ENCODE measurements at regions of chr11 and their contacts with region 1.

Region 1: DNA sequence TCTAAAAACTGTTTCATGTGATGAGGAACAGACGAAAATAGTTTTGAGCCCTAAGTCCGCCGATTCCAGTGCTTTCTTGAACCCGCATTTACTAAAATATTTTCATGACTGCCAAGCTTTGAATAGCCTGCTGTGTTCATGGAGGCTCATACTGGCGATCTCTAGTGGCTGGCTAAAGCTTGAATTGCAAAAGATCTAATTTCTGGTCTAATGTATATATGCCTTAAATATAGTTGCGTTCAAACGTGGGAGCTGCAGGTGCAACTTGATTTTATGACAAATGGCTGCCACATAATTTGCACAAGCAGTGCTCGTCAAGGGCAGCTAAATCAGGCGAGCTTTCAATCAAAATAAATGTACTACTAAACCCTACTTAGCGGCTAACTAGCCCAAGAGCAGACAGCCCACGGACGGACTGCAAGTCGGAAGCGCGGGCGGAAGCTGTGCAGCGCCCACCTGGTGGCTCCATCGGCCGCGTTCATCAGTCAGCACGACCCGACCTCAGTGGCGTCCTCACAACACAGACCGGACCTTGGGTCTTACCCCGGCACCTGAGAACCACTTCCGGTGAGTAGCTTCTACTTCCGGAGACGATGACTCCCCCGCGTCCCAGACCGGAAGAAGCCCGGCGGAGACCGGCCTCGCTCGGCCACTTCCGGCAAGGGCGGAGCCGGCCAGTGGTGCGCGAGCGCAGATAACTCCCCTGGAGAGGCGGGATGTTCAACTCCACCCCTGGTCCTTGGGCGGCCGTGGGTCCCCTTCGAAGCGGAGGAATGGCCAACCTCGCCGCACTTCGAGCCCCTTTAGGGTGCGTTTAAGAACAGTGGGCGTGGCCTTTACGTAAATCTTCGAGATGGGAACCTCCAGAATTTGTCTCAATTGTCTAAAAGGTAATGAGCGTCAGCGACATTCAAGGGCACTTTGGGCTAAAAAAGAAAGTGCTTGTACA is 6.1 kb downstream of the RPL27A start:
- DNase-seq: peak; percentile 92
- ATAC-seq: peak; percentile 90
- H3K4me3 Mint-ChIP-seq: peak overlapping the region; percentile 94
- H3K27ac Mint-ChIP-seq: peak overlapping the region; percentile 98
- H3K4me1 Mint-ChIP-seq: peaks cover 56% of the 10 kb centered on the region
- H3K27me3 Mint-ChIP-seq: no peaks in the 10 kb centered on the region

Region 2: GRCh38 chr11:7986768-7987559 is 701.7 kb before region 1 on chr11 and contains the start of gene EIF3F:
- CTCF ChIA-PET with region 1: no interaction called
- POLR2A ChIA-PET with region 1: no interaction called
- intact Hi-C with region 1: loop called in 1 of 2 experiments (anchors 2 kb)
- DNase-seq: peak; percentile 93
- ATAC-seq: peak; percentile 99
- H3K4me3 Mint-ChIP-seq: peak within 1 kb of the TSS; percentile 94
- H3K27ac Mint-ChIP-seq: peak within 1 kb of the TSS; percentile 99
- H3K4me1 Mint-ChIP-seq: peaks cover 37% of the 10 kb centered on the region
- H3K27me3 Mint-ChIP-seq: no peaks in the 10 kb centered on the region
- total RNA-seq, gene EIF3F: 270 to 289 TPM

Region 3: DNA sequence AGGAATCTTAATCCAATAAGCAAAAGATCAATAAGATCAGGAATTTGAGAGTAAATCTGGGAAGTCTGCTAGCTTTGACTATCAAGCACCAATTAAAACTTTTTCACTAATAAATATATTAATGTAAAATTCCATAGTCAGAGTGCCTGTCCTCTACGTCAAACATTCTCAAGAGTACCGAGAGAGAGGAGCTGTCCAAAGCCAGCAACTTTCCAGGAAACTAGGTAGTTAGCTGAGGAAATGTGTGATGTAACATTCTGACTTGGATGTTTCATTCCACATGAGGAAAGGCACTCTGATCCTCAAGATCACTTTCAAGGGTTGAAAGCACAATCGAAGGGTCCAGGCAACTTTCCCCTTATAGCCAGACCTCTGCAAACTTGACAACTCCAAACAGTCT is 207.8 kb before region 1 on chr11:
- CTCF ChIA-PET with region 1: no interaction called
- POLR2A ChIA-PET with region 1: no interaction called
- intact Hi-C with region 1: no loop called
- DNase-seq: no peak
- ATAC-seq: no peak
- H3K4me3 Mint-ChIP-seq: no peak overlapping the region
- H3K27ac Mint-ChIP-seq: no peak overlapping the region
- H3K4me1 Mint-ChIP-seq: no peaks in the 10 kb centered on the region
- H3K27me3 Mint-ChIP-seq: no peaks in the 10 kb centered on the region

Region 4: GRCh38 chr11:8717876-8718753 is 29.4 kb after region 1 on chr11:
- CTCF ChIA-PET with region 1: no interaction called
- POLR2A ChIA-PET with region 1: no interaction called
- intact Hi-C with region 1: no loop called
- DNase-seq: no peak
- ATAC-seq: no peak
- H3K4me3 Mint-ChIP-seq: no peak overlapping the region
- H3K27ac Mint-ChIP-seq: no peak overlapping the region
- H3K4me1 Mint-ChIP-seq: peaks cover 6% of the 10 kb centered on the region
- H3K27me3 Mint-ChIP-seq: peaks cover 2% of the 10 kb centered on the region

Region 5: GRCh38 chr11:8813658-8814057 is 125.0 kb after region 1 on chr11:
- CTCF ChIA-PET with region 1: no interaction called
- POLR2A ChIA-PET with region 1: no interaction called
- intact Hi-C with region 1: loop called (anchors 5 kb)
- DNase-seq: peak; percentile 73
- ATAC-seq: peak; percentile 91
- H3K4me3 Mint-ChIP-seq: no peak overlapping the region
- H3K27ac Mint-ChIP-seq: no peak overlapping the region
- H3K4me1 Mint-ChIP-seq: peaks cover 4% of the 10 kb centered on the region
- H3K27me3 Mint-ChIP-seq: peaks cover 9% of the 10 kb centered on the region

Region 6: DNA sequence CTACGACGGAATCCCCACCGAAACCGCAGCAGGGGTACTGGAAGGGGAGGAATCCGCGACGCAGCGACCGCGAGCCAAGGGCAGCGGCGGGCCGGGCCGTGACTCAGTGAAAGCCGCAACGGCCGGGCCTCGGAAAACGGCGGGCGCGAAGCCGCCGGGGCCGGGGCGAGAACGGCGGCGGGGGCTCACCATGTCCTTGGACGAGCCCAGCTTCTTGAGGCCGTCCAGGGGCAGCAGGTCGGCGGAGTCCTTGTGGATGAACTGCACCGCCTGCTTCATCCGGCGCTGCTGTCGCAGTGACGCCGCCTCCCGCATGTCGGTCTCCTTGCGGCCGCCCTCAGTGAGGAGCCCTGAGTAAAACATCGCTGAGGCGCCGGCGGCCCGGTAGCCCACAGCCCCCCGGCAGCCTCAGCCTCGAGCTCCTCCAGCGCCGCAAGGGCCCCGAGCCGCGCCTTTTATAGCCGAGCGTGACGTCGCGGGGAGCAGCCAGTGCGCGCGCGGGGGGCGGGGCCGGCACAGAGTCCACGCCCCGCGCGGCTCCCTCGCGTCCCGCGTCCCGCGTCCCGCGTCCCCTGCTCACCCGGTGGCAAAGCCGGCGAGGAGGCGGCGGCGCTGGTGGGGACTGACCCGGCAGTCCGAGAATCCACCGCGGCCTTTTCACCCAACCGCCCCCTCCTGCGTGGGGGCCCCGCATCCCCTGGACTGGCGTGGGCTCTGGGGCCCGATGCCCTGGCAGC is 315.1 kb after region 1 on chr11 and contains the start of gene NRIP3:
- CTCF ChIA-PET with region 1: no interaction called
- POLR2A ChIA-PET with region 1: no interaction called
- intact Hi-C with region 1: loop called in 1 of 2 experiments (anchors 5 kb)
- DNase-seq: peak; percentile 82
- ATAC-seq: peak; percentile 41
- H3K4me3 Mint-ChIP-seq: peak within 1 kb of the TSS; percentile 65
- H3K27ac Mint-ChIP-seq: peak within 1 kb of the TSS; percentile 38
- H3K4me1 Mint-ChIP-seq: peaks cover 27% of the 10 kb centered on the region
- H3K27me3 Mint-ChIP-seq: peaks cover 34% of the 10 kb centered on the region
- total RNA-seq, gene NRIP3: 2.1 to 2.2 TPM

Region 7: GRCh38 chr11:9314291-9315036 is 625.8 kb after region 1 on chr11 and contains the start of gene TMEM41B:
- CTCF ChIA-PET with region 1: no interaction called
- POLR2A ChIA-PET with region 1: no interaction called
- intact Hi-C with region 1: loop called in 1 of 2 experiments (anchors 1 kb)
- DNase-seq: peak; percentile 100
- ATAC-seq: peak; percentile 95
- H3K4me3 Mint-ChIP-seq: peak within 1 kb of the TSS; percentile 99
- H3K27ac Mint-ChIP-seq: peak within 1 kb of the TSS; percentile 99
- H3K4me1 Mint-ChIP-seq: peaks cover 36% of the 10 kb centered on the region
- H3K27me3 Mint-ChIP-seq: peaks cover 11% of the 10 kb centered on the region
- total RNA-seq, gene TMEM41B: 20.2 to 29.3 TPM

Measured in activated CD4-positive, alpha-beta T cell treated with anti-CD3 and anti-CD28 coated beads for 36 hours (primary cell).